Endothelial cell of umbilical vein (primary cell): ENCODE measurements at regions of chr1 and their contacts with region 1.

Region 1: GRCh38 chr1:58883037-58883887 is 99.4 kb upstream of the JUN start:
- DNase-seq: peak; percentile 99
- H3K4me3 ChIP-seq: no peak overlapping the region
- H3K27ac ChIP-seq: peak overlapping the region; percentile 99
- H3K4me1 ChIP-seq: peaks cover 42% of the 10 kb centered on the region
- H3K27me3 ChIP-seq: no peaks in the 10 kb centered on the region
- CTCF ChIP-seq: no peak
- POLR2A ChIP-seq: no peak

Region 2: DNA sequence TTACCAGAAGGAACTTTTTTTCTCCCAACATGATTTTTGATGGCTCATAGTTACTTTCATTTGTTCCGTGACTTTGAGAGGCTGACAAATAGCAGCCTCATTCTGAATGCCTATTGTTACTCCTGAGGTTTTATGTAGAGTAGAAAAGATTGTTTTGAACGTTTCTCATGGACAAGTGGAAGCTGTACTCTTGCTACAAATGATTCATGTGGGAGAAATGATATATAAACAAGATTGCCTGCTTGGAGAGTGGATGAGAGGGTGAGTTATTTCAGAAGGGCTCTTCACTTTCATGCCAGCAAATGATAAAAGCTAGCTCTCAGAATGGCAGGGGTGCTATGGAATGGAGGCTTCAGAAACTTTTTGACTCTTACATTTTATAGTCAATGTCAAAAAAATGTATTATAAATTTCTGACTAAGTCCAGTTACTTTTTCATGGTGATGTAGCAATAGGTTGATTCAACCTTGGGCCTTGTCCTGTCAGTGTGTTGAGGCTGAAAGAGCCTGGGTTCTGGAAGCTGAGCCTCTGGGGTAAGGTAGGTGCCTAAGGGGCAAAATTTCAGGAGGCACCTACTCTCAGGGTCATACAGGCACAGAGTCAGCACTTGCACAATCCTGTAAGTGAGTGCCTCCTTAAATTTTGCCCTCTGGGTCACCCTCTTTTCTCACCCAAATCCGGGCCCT is 118.8 kb before region 1 on chr1:
- CTCF ChIA-PET with region 1: no interaction called
- POLR2A ChIA-PET with region 1: no interaction called
- dilution Hi-C with region 1: no loop called
- intact Hi-C with region 1: no loop called
- DNase-seq: peak; percentile 90
- H3K4me3 ChIP-seq: no peak overlapping the region
- H3K27ac ChIP-seq: peak overlapping the region; percentile 76
- H3K4me1 ChIP-seq: peaks cover 45% of the 10 kb centered on the region
- H3K27me3 ChIP-seq: no peaks in the 10 kb centered on the region
- CTCF ChIP-seq: no peak
- POLR2A ChIP-seq: no peak

Region 3: GRCh38 chr1:58816072-58816746 is 67.1 kb before region 1 on chr1:
- CTCF ChIA-PET with region 1: interaction called, 4 read pairs
- POLR2A ChIA-PET with region 1: interaction called, 4 read pairs
- dilution Hi-C with region 1: no loop called
- intact Hi-C with region 1: loop called (anchors 1 kb)
- DNase-seq: peak; percentile 91
- H3K4me3 ChIP-seq: peak overlapping the region; percentile 34 to 68 (median 54)
- H3K27ac ChIP-seq: peak overlapping the region; percentile 100
- H3K4me1 ChIP-seq: peaks cover 72% of the 10 kb centered on the region
- H3K27me3 ChIP-seq: no peaks in the 10 kb centered on the region
- CTCF ChIP-seq: peak in 1 of 2 donors; percentile 14
- POLR2A ChIP-seq: peak; percentile 63

Region 4: GRCh38 chr1:58896246-58897183 is 13.3 kb after region 1 on chr1:
- CTCF ChIA-PET with region 1: interaction called, 13 read pairs
- POLR2A ChIA-PET with region 1: interaction called, 4 read pairs
- dilution Hi-C with region 1: no loop called
- intact Hi-C with region 1: loop called (anchors 1 kb)
- DNase-seq: peak; percentile 79
- H3K4me3 ChIP-seq: no peak overlapping the region
- H3K27ac ChIP-seq: peak overlapping the region; percentile 61
- H3K4me1 ChIP-seq: peaks cover 75% of the 10 kb centered on the region
- H3K27me3 ChIP-seq: no peaks in the 10 kb centered on the region
- CTCF ChIP-seq: peak in 1 of 2 donors; percentile 17
- POLR2A ChIP-seq: no peak

Region 5: GRCh38 chr1:59020151-59020997 is 137.1 kb after region 1 on chr1:
- CTCF ChIA-PET with region 1: interaction called, 3 read pairs
- POLR2A ChIA-PET with region 1: no interaction called
- dilution Hi-C with region 1: no loop called
- intact Hi-C with region 1: loop called (anchors 2 kb)
- DNase-seq: peak; percentile 87
- H3K4me3 ChIP-seq: peak overlapping the region in 1 of 3 experiments; percentile 56
- H3K27ac ChIP-seq: peak overlapping the region; percentile 65
- H3K4me1 ChIP-seq: peaks cover 31% of the 10 kb centered on the region
- H3K27me3 ChIP-seq: no peaks in the 10 kb centered on the region
- CTCF ChIP-seq: no peak
- POLR2A ChIP-seq: no peak

Region 6: GRCh38 chr1:59083946-59084865 is 200.9 kb after region 1 on chr1:
- CTCF ChIA-PET with region 1: interaction called, 3 read pairs
- POLR2A ChIA-PET with region 1: no interaction called
- dilution Hi-C with region 1: no loop called
- intact Hi-C with region 1: loop called (anchors 1 kb)
- DNase-seq: peak; percentile 67
- H3K4me3 ChIP-seq: no peak overlapping the region
- H3K27ac ChIP-seq: peak overlapping the region; percentile 49
- H3K4me1 ChIP-seq: peaks cover 23% of the 10 kb centered on the region
- H3K27me3 ChIP-seq: no peaks in the 10 kb centered on the region
- CTCF ChIP-seq: no peak
- POLR2A ChIP-seq: peak; percentile 20

Region 7: GRCh38 chr1:59296358-59297256 is 413.3 kb after region 1 on chr1 and contains the start of gene FGGY:
- CTCF ChIA-PET with region 1: interaction called, 3 read pairs
- POLR2A ChIA-PET with region 1: no interaction called
- dilution Hi-C with region 1: no loop called
- intact Hi-C with region 1: loop called (anchors 1 kb)
- DNase-seq: peak; percentile 99
- H3K4me3 ChIP-seq: peak within 1 kb of the TSS; percentile 36 to 81 (median 64)
- H3K27ac ChIP-seq: peak within 1 kb of the TSS; percentile 92
- H3K4me1 ChIP-seq: peaks cover 30% of the 10 kb centered on the region
- H3K27me3 ChIP-seq: no peaks in the 10 kb centered on the region
- CTCF ChIP-seq: no peak
- POLR2A ChIP-seq: peak; percentile 95
- total RNA-seq, gene FGGY: 5.6 and 8.3 TPM in 2 replicates

Region 8: DNA sequence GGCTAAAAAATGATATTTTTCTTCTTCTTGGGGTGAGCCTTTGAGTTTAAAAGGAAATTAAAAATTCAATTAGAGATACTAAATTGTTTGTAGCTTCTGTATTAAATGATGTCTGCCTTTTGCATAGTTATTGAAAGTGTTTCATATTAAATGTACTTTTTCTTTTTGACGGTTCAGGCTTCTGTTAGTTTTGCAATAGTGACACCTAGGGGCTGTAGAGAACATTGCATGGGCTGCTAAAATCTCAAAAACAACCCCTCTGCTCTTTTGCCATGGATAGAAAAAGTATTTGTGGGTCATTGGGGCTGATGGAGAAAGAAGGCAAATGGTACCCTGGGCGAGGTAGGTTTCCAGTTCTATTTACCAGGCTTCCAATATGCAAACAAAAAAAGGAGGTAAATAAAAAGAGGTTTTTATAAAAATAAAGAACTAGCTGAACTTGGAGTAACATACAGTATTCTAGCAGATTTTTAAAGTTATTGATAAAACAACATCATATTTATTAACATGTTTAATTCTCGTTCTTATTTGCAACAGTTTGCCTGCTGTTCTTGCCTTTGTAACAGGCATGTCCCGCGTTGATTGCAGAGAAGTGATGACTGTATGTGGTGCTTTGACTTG is 816.1 kb after region 1 on chr1:
- CTCF ChIA-PET with region 1: interaction called, 5 read pairs
- POLR2A ChIA-PET with region 1: no interaction called
- dilution Hi-C with region 1: no loop called
- intact Hi-C with region 1: loop called (anchors 2 kb)
- DNase-seq: peak; percentile 62
- H3K4me3 ChIP-seq: no peak overlapping the region
- H3K27ac ChIP-seq: no peak overlapping the region
- H3K4me1 ChIP-seq: peaks cover 4% of the 10 kb centered on the region
- H3K27me3 ChIP-seq: no peaks in the 10 kb centered on the region
- CTCF ChIP-seq: peak; percentile 72 to 78
- POLR2A ChIP-seq: no peak